GM10248 (cell line): ENCODE measurements at regions of chr17 and their contacts with region 1.

Region 1: DNA sequence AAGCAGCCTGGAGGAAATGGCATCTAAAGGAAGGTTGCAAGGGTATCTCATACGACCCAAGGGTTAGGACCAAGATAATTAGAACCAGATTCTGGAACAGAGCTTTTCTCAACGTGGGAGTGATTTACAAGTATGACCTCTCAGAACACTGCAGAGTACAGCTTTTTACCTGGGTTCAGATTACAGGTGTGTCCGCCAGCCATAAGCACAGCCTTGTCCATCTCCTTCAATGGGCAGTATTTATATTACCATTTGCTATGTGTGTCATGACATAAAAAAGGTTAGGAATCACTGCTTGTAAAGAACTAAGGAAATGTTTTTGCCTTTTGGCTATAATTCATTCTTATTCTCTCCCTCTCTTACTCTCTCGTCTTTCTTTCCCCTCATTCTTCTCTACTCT is 36.7 kb downstream of the MYO1D start:
- DNase-seq: no peak
- CTCF ChIP-seq: no peak

Region 2: GRCh38 chr17:32794533-32795246 is 45.6 kb before region 1 on chr17:
- CTCF ChIA-PET with region 1: no interaction called
- POLR2A ChIA-PET with region 1: no interaction called
- DNase-seq: no peak
- CTCF ChIP-seq: no peak

Region 3: DNA sequence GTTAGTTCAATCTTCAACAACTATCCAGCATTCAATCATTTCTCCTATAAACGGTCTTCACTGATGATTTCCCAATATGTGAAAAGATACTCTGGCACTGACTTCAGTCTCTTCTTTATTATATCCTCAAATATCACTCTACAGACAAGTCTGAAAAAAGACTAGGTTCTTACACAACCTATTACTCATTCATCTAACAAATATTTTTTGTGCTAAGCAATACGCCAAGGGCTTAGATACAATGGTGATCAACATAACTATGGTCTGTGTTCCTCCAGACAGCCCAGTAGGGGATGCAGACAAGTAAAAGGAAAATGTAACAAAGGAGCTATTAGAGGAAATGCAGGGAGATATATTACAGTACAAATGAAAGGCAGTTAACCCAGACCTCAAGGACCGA is 27.2 kb before region 1 on chr17:
- CTCF ChIA-PET with region 1: no interaction called
- POLR2A ChIA-PET with region 1: no interaction called
- DNase-seq: no peak
- CTCF ChIP-seq: no peak

Region 4: GRCh38 chr17:32828822-32829221 is 11.4 kb before region 1 on chr17:
- CTCF ChIA-PET with region 1: interaction called, 11 read pairs
- POLR2A ChIA-PET with region 1: no interaction called
- DNase-seq: no peak
- CTCF ChIP-seq: no peak

Region 5: GRCh38 chr17:32917081-32917480 is 76.8 kb after region 1 on chr17:
- CTCF ChIA-PET with region 1: no interaction called
- POLR2A ChIA-PET with region 1: no interaction called
- DNase-seq: no peak
- CTCF ChIP-seq: no peak